ENCODE measurements at regions of chr21 and their contacts with region 1.

Region 1: GRCh38 chr21:14773777-14774345 is 227.7 kb upstream of the SAMSN1 start:
- DNase-seq: peak; percentile 83
- H3K4me3 ChIP-seq: no peak overlapping the region
- H3K27ac ChIP-seq: no peak overlapping the region
- H3K4me1 ChIP-seq: peaks cover 0 to 5% (median 0%) of the 10 kb centered on the region in 4 donors
- H3K27me3 ChIP-seq: no peaks in the 10 kb centered on the region
- CTCF ChIP-seq: peak; percentile 65 to 72 (median 68)
- EP300 ChIP-seq: no peak
- POLR2A ChIP-seq: no peak

Region 2: DNA sequence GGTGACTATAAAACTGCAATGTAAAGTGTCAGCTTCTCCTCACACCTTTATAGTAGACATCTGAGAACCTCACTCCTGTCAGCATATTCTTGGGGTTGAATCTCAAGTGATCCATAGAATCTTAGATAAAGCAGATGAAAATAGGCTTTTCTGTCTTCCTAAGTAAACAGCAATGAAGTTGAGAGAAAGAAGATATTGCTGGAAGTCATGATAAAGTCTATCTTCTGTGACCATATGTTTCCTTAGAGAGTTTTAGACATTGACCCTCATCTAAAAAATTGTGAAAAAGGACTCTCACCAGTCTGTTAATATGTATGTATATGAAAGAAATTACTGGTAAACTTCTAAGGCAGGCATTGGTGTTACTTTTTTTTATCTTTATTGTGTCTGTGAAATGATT is 629.9 kb before region 1 on chr21:
- in situ Hi-C with region 1: no loop called
- intact Hi-C with region 1: no loop called
- DNase-seq: no peak
- H3K4me3 ChIP-seq: no peak overlapping the region
- H3K27ac ChIP-seq: no peak overlapping the region
- H3K4me1 ChIP-seq: no peaks in the 10 kb centered on the region
- H3K27me3 ChIP-seq: no peaks in the 10 kb centered on the region
- CTCF ChIP-seq: no peak
- EP300 ChIP-seq: no peak
- POLR2A ChIP-seq: no peak

Region 3: GRCh38 chr21:14438211-14438610 is 335.6 kb before region 1 on chr21:
- in situ Hi-C with region 1: loop called in 2 of 4 experiments (anchors 10 to 25 kb)
- intact Hi-C with region 1: no loop called
- DNase-seq: no peak
- H3K4me3 ChIP-seq: no peak overlapping the region
- H3K27ac ChIP-seq: no peak overlapping the region
- H3K4me1 ChIP-seq: no peaks in the 10 kb centered on the region
- H3K27me3 ChIP-seq: no peaks in the 10 kb centered on the region
- CTCF ChIP-seq: no peak
- EP300 ChIP-seq: no peak
- POLR2A ChIP-seq: no peak

Region 4: DNA sequence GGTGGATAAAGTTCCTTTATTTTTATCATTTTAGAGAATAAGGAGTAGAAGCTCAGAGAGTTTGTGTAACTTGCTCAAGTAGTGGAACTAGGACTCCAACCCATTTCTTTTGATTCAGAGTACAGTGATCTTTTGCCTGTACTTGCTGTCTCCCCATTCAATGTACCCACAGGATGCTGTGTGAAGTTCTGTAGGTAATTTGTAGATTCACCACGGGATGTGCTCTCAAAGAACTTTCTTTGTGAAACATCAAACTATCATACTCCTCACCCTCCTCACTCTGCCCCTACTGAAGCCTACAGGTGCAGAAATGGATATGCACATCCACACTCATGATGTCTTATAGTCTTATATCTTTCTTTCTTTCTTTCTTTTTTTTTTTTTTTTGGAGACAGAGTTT is 325.1 kb before region 1 on chr21:
- in situ Hi-C with region 1: loop called in 2 of 4 experiments (anchors 10 to 25 kb)
- intact Hi-C with region 1: no loop called
- DNase-seq: no peak
- H3K4me3 ChIP-seq: no peak overlapping the region
- H3K27ac ChIP-seq: no peak overlapping the region
- H3K4me1 ChIP-seq: peaks cover 0 to 5% (median 2%) of the 10 kb centered on the region in 4 donors
- H3K27me3 ChIP-seq: no peaks in the 10 kb centered on the region
- CTCF ChIP-seq: no peak
- EP300 ChIP-seq: no peak
- POLR2A ChIP-seq: no peak

Region 5: GRCh38 chr21:14492931-14493330 is 280.9 kb before region 1 on chr21:
- in situ Hi-C with region 1: no loop called
- intact Hi-C with region 1: no loop called
- DNase-seq: no peak
- H3K4me3 ChIP-seq: no peak overlapping the region
- H3K27ac ChIP-seq: no peak overlapping the region
- H3K4me1 ChIP-seq: peaks cover 0 to 10% (median 3%) of the 10 kb centered on the region in 4 donors
- H3K27me3 ChIP-seq: no peaks in the 10 kb centered on the region
- CTCF ChIP-seq: no peak
- EP300 ChIP-seq: no peak
- POLR2A ChIP-seq: no peak